ENCODE measurements at regions of chr10 and their contacts with region 1.

Region 1: GRCh38 chr10:82377608-82378007 is 502.6 kb downstream of the NRG3 start:
- DNase-seq: peak; percentile 61
- H3K4me3 ChIP-seq: no peak overlapping the region
- H3K27ac ChIP-seq: no peak overlapping the region
- H3K4me1 ChIP-seq: peaks cover 10% of the 10 kb centered on the region
- H3K27me3 ChIP-seq: no peaks in the 10 kb centered on the region
- CTCF ChIP-seq: peak; percentile 17 to 44
- POLR2A ChIP-seq: no peak

Region 2: DNA sequence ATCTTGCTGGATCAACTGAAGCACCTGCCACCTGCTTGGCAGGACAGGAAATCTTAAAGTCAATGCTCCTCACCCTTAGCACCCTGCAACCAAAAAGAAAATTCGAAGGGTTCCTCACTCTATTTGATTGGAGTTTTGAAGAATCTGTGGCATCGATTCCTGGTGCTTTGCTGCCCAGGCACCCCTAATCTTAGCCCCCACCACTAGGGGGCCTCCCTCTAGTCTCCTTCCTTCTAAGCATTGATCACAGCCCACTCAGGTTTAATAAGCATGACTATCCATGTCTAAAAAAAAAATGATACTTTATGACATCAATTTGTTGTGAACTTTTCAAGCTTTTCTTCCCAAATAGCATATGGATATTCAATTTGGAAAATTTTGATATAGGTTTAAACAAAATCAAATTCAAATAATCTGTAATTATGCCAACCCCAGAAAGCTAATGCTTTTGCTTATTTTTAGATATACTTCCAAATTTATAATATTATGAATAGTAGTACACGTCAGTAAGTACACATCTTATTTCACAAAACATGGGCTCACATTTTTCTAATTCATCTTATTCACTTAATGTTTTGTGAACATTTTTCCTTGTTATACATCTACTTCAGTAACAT is 457.3 kb before region 1 on chr10:
- CTCF ChIA-PET with region 1: no interaction called
- POLR2A ChIA-PET with region 1: no interaction called
- dilution Hi-C with region 1: no loop called
- intact Hi-C with region 1: loop called (anchors 1 kb)
- DNase-seq: peak; percentile 10
- H3K4me3 ChIP-seq: no peak overlapping the region
- H3K27ac ChIP-seq: no peak overlapping the region
- H3K4me1 ChIP-seq: no peaks in the 10 kb centered on the region
- H3K27me3 ChIP-seq: no peaks in the 10 kb centered on the region
- CTCF ChIP-seq: peak; percentile 78 to 80
- POLR2A ChIP-seq: no peak

Region 3: GRCh38 chr10:82150120-82150900 is 227.3 kb before region 1 on chr10:
- CTCF ChIA-PET with region 1: no interaction called
- POLR2A ChIA-PET with region 1: no interaction called
- dilution Hi-C with region 1: no loop called
- intact Hi-C with region 1: loop called (anchors 1 kb)
- DNase-seq: peak; percentile 25
- H3K4me3 ChIP-seq: no peak overlapping the region
- H3K27ac ChIP-seq: no peak overlapping the region
- H3K4me1 ChIP-seq: no peaks in the 10 kb centered on the region
- H3K27me3 ChIP-seq: no peaks in the 10 kb centered on the region
- CTCF ChIP-seq: peak; percentile 15 to 38
- POLR2A ChIP-seq: no peak

Region 4: DNA sequence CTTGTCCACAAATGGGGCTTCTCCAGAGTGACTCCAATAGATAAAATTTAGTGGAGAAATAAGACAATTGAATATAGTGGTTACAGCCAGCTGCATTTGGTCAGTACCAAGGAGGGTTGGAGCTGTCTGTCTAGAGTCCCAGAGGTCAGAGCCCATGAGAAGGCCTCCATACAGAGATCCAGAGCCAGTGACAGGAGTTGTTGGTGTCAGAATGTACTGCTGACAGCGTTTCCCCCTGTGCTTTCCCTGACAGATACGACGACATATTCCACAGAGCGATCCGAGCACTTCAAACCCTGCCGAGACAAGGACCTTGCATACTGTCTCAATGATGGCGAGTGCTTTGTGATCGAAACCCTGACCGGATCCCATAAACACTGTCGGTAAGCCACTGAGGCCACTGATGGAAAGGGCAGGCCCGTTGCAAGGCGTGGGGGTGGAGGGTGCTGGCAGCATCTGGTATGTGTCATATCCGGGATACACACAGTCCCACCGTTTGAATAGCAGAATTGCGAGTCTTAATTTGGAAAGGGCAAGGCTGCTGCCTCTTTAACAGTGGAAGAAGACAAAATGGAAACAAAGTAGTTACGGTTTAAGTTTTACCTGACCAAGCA is 19.0 kb before region 1 on chr10:
- CTCF ChIA-PET with region 1: no interaction called
- POLR2A ChIA-PET with region 1: no interaction called
- dilution Hi-C with region 1: no loop called
- intact Hi-C with region 1: no loop called
- DNase-seq: no peak
- H3K4me3 ChIP-seq: no peak overlapping the region
- H3K27ac ChIP-seq: no peak overlapping the region
- H3K4me1 ChIP-seq: no peaks in the 10 kb centered on the region
- H3K27me3 ChIP-seq: no peaks in the 10 kb centered on the region
- CTCF ChIP-seq: no peak
- POLR2A ChIP-seq: no peak

Measured in endothelial cell of umbilical vein (primary cell).